ENCODE measurements at regions of chr7 and their contacts with region 1.

Region 1: DNA sequence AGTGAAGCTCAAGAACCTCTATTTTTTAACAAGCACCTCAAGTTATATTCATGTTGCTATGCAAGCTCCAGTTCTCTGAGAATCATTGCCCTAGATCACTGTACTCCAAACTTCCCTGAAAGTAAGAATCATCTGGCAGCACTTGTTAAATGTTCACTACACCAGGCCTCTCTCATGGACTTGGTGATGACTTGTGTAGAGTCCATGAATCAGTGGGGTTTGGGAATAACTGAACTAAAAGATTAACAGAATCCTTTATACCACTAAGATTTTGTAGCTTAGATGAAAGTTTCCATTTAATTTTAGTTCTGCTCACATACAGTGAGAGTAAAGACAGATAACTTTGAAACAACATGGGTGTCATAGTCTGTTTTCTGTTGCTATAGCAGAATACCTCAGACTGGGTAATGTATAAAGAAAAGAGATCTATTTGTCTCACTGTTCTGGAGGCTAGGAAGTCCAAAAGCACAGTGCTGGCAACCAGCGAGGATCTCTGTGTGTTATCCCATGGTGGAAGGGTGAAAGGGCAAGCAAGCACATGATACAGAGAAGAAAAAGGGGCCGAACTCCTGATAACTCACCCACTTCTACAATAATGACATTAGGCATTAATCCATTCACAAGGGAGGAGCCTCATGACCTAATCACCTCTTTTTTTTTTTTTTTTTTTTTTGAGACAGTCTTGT is 27.9 kb upstream of the AOAH start:
- DNase-seq: no peak
- ATAC-seq: no peak
- H3K4me3 ChIP-seq: no peak overlapping the region
- H3K27ac ChIP-seq: no peak overlapping the region
- H3K4me1 ChIP-seq: no peaks in the 10 kb centered on the region
- H3K27me3 ChIP-seq: no peaks in the 10 kb centered on the region
- CTCF ChIP-seq: no peak

Region 2: GRCh38 chr7:35645691-35646090 is 1106.5 kb before region 1 on chr7:
- CTCF ChIA-PET with region 1: no interaction called
- POLR2A ChIA-PET with region 1: no interaction called
- in situ Hi-C with region 1: no loop called
- intact Hi-C with region 1: no loop called
- DNase-seq: no peak
- ATAC-seq: no peak
- H3K4me3 ChIP-seq: no peak overlapping the region
- H3K27ac ChIP-seq: no peak overlapping the region
- H3K4me1 ChIP-seq: no peaks in the 10 kb centered on the region
- H3K27me3 ChIP-seq: no peaks in the 10 kb centered on the region
- CTCF ChIP-seq: no peak

Region 3: GRCh38 chr7:37425498-37425897 is 673.3 kb after region 1 on chr7:
- CTCF ChIA-PET with region 1: no interaction called
- POLR2A ChIA-PET with region 1: interaction called, 23 read pairs
- in situ Hi-C with region 1: no loop called
- intact Hi-C with region 1: no loop called
- DNase-seq: no peak
- ATAC-seq: no peak
- H3K4me3 ChIP-seq: no peak overlapping the region
- H3K27ac ChIP-seq: no peak overlapping the region
- H3K4me1 ChIP-seq: no peaks in the 10 kb centered on the region
- H3K27me3 ChIP-seq: peaks cover 11% of the 10 kb centered on the region
- CTCF ChIP-seq: no peak

Region 4: DNA sequence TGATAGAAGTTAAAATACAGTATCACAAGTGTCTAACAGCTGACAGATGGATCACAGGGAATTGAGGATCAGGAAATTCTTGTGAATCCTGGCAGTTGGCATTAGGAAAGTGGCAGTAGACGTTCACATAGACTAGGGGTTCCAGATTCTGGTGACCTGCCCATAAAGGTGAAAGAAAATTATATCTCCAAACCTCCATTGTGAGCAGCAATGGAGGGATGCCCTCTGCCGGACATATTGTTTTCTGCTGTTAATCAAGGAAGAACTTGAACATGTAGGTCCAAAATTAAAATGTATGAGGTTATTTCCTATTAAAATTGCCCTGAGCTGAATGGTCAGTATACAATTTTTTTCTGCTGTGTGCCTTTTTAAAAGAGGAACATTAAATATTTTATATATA is 1101.3 kb after region 1 on chr7:
- CTCF ChIA-PET with region 1: no interaction called
- POLR2A ChIA-PET with region 1: no interaction called
- in situ Hi-C with region 1: no loop called
- intact Hi-C with region 1: no loop called
- DNase-seq: no peak
- ATAC-seq: no peak
- H3K4me3 ChIP-seq: no peak overlapping the region
- H3K27ac ChIP-seq: no peak overlapping the region
- H3K4me1 ChIP-seq: no peaks in the 10 kb centered on the region
- H3K27me3 ChIP-seq: peaks cover 3% of the 10 kb centered on the region
- CTCF ChIP-seq: peak; percentile 77

Measured in Panc1 (cell line).